PC-9 (cell line): ENCODE measurements at regions of chr14 and their contacts with region 1.

Region 1: GRCh38 chr14:20970983-20971704 is 15.9 kb downstream of the RNASE2 start:
- DNase-seq: peak; percentile 42 to 78
- H3K4me3 ChIP-seq: peak overlapping the region; percentile 57
- H3K27ac ChIP-seq: no peak overlapping the region
- H3K4me1 ChIP-seq: peaks cover 6% of the 10 kb centered on the region; the same call in 1 of the 2 replicates
- H3K27me3 ChIP-seq: no peaks in the 10 kb centered on the region
- CTCF ChIP-seq: peak; percentile 76

Region 2: GRCh38 chr14:20697273-20698017 is 273.7 kb before region 1 on chr14:
- CTCF ChIA-PET with region 1: no interaction called
- POLR2A ChIA-PET with region 1: no interaction called
- intact Hi-C with region 1: loop called (anchors 1 kb)
- DNase-seq: peak; percentile 51 to 55
- H3K4me3 ChIP-seq: no peak overlapping the region
- H3K27ac ChIP-seq: no peak overlapping the region
- H3K4me1 ChIP-seq: no peaks in the 10 kb centered on the region
- H3K27me3 ChIP-seq: no peaks in the 10 kb centered on the region
- CTCF ChIP-seq: peak; percentile 73

Region 3: DNA sequence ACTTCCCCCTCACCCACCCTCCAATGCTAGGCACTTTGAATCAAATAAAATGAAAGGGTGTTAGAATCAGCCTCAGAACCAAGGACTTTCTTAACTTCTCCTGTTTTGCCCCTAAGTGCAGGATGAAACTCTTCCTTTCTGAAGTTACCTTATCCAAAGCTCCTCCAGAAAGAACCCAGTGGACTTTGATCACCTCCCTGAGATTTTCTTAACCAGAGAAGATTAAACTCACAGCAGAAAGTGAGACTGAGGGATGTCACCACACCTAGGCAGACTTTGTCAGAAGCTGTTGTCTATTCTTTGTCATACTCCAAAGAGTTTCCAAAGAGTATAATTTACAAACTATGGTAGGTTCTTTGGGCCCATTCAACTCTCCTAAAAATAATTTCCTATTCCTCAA is 94.1 kb before region 1 on chr14:
- CTCF ChIA-PET with region 1: no interaction called
- POLR2A ChIA-PET with region 1: interaction called, 10 read pairs
- intact Hi-C with region 1: no loop called
- DNase-seq: no peak
- H3K4me3 ChIP-seq: no peak overlapping the region
- H3K27ac ChIP-seq: no peak overlapping the region
- H3K4me1 ChIP-seq: no peaks in the 10 kb centered on the region
- H3K27me3 ChIP-seq: peaks cover 3% of the 10 kb centered on the region; the same call in 1 of the 2 replicates
- CTCF ChIP-seq: no peak

Region 4: GRCh38 chr14:20998664-20999366 is 27.7 kb after region 1 on chr14 and contains the start of gene SLC39A2:
- CTCF ChIA-PET with region 1: interaction called, 9 read pairs
- POLR2A ChIA-PET with region 1: no interaction called
- intact Hi-C with region 1: loop called (anchors 2 kb)
- DNase-seq: peak; percentile 64 to 76
- H3K4me3 ChIP-seq: no peak within 1 kb of the TSS
- H3K27ac ChIP-seq: peak within 1 kb of the TSS; percentile 68
- H3K4me1 ChIP-seq: peaks cover 20% of the 10 kb centered on the region
- H3K27me3 ChIP-seq: no peaks in the 10 kb centered on the region
- CTCF ChIP-seq: no peak
- total RNA-seq, gene SLC39A2: 0.35 and 0.68 TPM in 2 replicates

Region 5: GRCh38 chr14:21057803-21058675 is 86.9 kb after region 1 on chr14 and contains the start of gene RNASE8:
- CTCF ChIA-PET with region 1: no interaction called
- POLR2A ChIA-PET with region 1: no interaction called
- intact Hi-C with region 1: no loop called
- DNase-seq: peak in 1 of 2 experiments; percentile 36
- H3K4me3 ChIP-seq: no peak within 1 kb of the TSS
- H3K27ac ChIP-seq: no peak within 1 kb of the TSS
- H3K4me1 ChIP-seq: no peaks in the 10 kb centered on the region
- H3K27me3 ChIP-seq: no peaks in the 10 kb centered on the region
- CTCF ChIP-seq: no peak; the same call in 1 of the 2 replicates
- total RNA-seq, gene RNASE8: not detected in 2 replicates

Region 6: DNA sequence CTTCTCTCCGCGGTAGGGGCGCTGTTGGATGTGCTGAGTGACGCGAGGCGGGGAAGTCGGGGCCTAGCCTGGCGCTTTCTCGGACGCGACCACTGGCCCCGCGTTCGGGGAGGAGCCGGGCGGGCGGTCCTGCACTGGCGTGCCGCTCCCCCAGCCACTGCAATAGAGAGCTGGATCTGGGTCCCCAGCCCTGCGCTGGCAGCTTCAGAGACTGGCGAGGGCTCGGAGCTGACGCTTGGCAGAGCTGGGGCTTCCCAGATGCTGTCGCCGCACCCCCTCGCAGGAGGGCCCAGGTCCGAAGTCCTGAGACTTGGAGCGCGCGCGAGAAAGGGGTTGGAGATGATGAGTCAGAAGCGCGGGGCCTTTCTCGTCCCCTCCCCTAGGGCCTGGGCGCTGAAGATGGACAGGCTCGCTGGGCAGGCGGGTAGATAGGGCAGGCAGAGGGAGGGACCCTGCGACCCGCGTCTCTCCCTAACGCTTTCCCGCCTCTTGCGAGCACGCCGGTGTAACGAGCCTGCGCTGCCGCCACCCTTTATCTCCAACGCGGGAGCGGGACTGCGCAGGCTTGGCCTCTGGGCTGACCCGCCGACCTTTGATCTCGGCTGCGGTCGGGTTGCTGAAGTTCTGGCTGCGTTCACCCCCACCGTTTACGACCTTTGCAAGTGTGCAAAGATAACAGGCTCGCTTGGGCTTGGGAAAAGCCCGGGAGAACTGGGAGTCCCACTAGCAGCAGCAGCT is 132.7 kb after region 1 on chr14:
- CTCF ChIA-PET with region 1: no interaction called
- POLR2A ChIA-PET with region 1: no interaction called
- intact Hi-C with region 1: loop called (anchors 10 kb)
- DNase-seq: peak; percentile 81 to 88
- H3K4me3 ChIP-seq: peak overlapping the region; percentile 70
- H3K27ac ChIP-seq: peak overlapping the region; percentile 89
- H3K4me1 ChIP-seq: peaks cover 54% of the 10 kb centered on the region
- H3K27me3 ChIP-seq: no peaks in the 10 kb centered on the region
- CTCF ChIP-seq: no peak

Region 7: GRCh38 chr14:21807975-21808374 is 836.8 kb after region 1 on chr14:
- CTCF ChIA-PET with region 1: no interaction called
- POLR2A ChIA-PET with region 1: no interaction called
- intact Hi-C with region 1: no loop called
- DNase-seq: no peak
- H3K4me3 ChIP-seq: no peak overlapping the region
- H3K27ac ChIP-seq: no peak overlapping the region
- H3K4me1 ChIP-seq: no peaks in the 10 kb centered on the region
- H3K27me3 ChIP-seq: no peaks in the 10 kb centered on the region
- CTCF ChIP-seq: no peak